B cell (primary cell): ENCODE measurements at regions of chr6 and their contacts with region 1.

Region 1: DNA sequence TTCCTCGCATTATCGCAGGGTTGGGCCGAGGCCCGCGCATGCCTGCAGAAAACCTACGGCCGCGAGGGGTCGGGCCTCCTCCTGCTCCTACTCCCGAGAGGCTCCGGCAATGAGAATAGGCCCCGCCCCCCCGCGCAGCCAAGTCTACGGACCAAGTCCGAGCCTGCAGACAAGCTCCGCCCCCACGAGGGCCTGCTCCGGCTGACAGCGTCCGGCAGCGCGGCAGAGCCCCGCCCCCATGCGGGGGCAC is 3.1 kb upstream of the GPSM3 start:
- DNase-seq: no peak
- ATAC-seq: peak; percentile 83
- H3K4me3 ChIP-seq: peak overlapping the region in 4 of 5 experiments; percentile 89 to 99 (median 94)
- H3K4me3 Mint-ChIP-seq: peak overlapping the region; percentile 95
- H3K27ac ChIP-seq: peak overlapping the region; percentile 99 to 100
- H3K27ac Mint-ChIP-seq: peak overlapping the region; percentile 99
- H3K4me1 ChIP-seq: peaks cover 40 to 56% of the 10 kb centered on the region in 2 donors
- H3K4me1 Mint-ChIP-seq: peaks cover 58% of the 10 kb centered on the region
- H3K27me3 ChIP-seq: no peaks in the 10 kb centered on the region
- H3K27me3 Mint-ChIP-seq: no peaks in the 10 kb centered on the region
- CTCF ChIP-seq: peak; percentile 55

Region 2: DNA sequence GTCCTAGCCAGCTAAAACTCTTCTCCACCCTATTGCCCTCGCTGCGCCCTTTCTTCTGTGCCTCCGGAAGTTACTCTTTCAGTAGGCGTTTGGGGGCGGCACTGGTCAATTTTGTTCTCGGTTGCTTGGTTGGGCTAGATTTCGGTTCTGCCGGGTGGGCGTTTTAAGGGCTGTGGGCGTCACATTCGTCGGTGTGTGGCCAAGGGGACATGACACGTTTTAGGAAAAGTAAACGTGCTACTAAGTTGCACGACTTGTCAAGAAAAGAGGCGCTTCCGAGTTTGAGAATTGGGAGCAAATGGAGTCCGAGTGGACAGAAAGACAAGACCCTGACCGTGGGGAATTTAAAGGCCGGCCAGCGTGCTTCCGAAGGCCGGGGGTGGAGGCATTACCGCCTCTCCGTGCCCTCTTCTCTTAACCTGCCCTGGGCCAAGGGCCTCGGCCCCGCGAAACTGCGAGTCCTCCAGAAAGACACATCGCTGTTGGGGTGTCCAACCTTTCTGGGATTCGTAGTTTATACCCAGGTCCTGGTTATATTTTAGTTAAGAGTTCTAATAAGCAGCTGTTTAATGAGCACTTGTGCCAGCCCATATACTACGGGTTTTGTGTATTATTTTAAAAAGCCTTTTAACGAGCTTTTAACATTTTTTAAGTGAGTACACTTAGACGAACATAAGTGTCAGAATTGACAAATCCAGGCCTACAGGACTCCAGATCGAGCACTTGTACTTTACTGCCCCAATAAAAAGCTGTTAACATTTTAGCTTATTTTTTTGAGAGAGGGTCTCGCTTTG is 542.5 kb before region 1 on chr6:
- CTCF ChIA-PET with region 1: no interaction called
- POLR2A ChIA-PET with region 1: no interaction called
- intact Hi-C with region 1: loop called (anchors 5 kb)
- DNase-seq: no peak
- ATAC-seq: peak; percentile 69
- H3K4me3 ChIP-seq: peak overlapping the region; percentile 66 to 96 (median 86)
- H3K4me3 Mint-ChIP-seq: peak overlapping the region; percentile 98
- H3K27ac ChIP-seq: peak overlapping the region; percentile 97 to 98
- H3K27ac Mint-ChIP-seq: peak overlapping the region; percentile 100
- H3K4me1 ChIP-seq: peaks cover 22 to 29% of the 10 kb centered on the region in 2 donors
- H3K4me1 Mint-ChIP-seq: peaks cover 48% of the 10 kb centered on the region
- H3K27me3 ChIP-seq: no peaks in the 10 kb centered on the region
- H3K27me3 Mint-ChIP-seq: no peaks in the 10 kb centered on the region
- CTCF ChIP-seq: no peak

Region 3: GRCh38 chr6:31958741-31959739 is 236.5 kb before region 1 on chr6 and contains the starts of genes NELFE and SKIC2:
- CTCF ChIA-PET with region 1: no interaction called
- POLR2A ChIA-PET with region 1: no interaction called
- intact Hi-C with region 1: loop called (anchors 5 kb)
- DNase-seq: peak; percentile 99
- ATAC-seq: peak; percentile 98
- H3K4me3 ChIP-seq: peak within 1 kb of the TSS; percentile 88 to 98 (median 91)
- H3K4me3 Mint-ChIP-seq: peak within 1 kb of the TSS; percentile 96
- H3K27ac ChIP-seq: peak within 1 kb of the TSS; percentile 84 to 91
- H3K27ac Mint-ChIP-seq: peak within 1 kb of the TSS; percentile 96
- H3K4me1 ChIP-seq: peaks cover 16 to 23% of the 10 kb centered on the region in 2 donors
- H3K4me1 Mint-ChIP-seq: peaks cover 30% of the 10 kb centered on the region
- H3K27me3 ChIP-seq: no peaks in the 10 kb centered on the region
- H3K27me3 Mint-ChIP-seq: no peaks in the 10 kb centered on the region
- CTCF ChIP-seq: no peak
- total RNA-seq, gene NELFE: 48.6 and 53.7 TPM in 2 replicates
- total RNA-seq, gene SKIC2: 119 and 122 TPM in 2 replicates

Region 4: GRCh38 chr6:32127717-32128592 is 67.6 kb before region 1 on chr6 and contains the start of gene ATF6B:
- CTCF ChIA-PET with region 1: interaction called, 9 read pairs
- POLR2A ChIA-PET with region 1: interaction called, 15 read pairs
- intact Hi-C with region 1: loop called (anchors 1 kb)
- DNase-seq: peak; percentile 98
- ATAC-seq: peak; percentile 92
- H3K4me3 ChIP-seq: peak within 1 kb of the TSS; percentile 82 to 100 (median 99)
- H3K4me3 Mint-ChIP-seq: peak within 1 kb of the TSS; percentile 98
- H3K27ac ChIP-seq: peak within 1 kb of the TSS; percentile 62 to 91
- H3K27ac Mint-ChIP-seq: peak within 1 kb of the TSS; percentile 95
- H3K4me1 ChIP-seq: peaks cover 26 to 36% of the 10 kb centered on the region in 2 donors
- H3K4me1 Mint-ChIP-seq: peaks cover 48% of the 10 kb centered on the region
- H3K27me3 ChIP-seq: no peaks in the 10 kb centered on the region
- H3K27me3 Mint-ChIP-seq: no peaks in the 10 kb centered on the region
- CTCF ChIP-seq: no peak
- total RNA-seq, gene ATF6B: 201 and 206 TPM in 2 replicates

Region 5: DNA sequence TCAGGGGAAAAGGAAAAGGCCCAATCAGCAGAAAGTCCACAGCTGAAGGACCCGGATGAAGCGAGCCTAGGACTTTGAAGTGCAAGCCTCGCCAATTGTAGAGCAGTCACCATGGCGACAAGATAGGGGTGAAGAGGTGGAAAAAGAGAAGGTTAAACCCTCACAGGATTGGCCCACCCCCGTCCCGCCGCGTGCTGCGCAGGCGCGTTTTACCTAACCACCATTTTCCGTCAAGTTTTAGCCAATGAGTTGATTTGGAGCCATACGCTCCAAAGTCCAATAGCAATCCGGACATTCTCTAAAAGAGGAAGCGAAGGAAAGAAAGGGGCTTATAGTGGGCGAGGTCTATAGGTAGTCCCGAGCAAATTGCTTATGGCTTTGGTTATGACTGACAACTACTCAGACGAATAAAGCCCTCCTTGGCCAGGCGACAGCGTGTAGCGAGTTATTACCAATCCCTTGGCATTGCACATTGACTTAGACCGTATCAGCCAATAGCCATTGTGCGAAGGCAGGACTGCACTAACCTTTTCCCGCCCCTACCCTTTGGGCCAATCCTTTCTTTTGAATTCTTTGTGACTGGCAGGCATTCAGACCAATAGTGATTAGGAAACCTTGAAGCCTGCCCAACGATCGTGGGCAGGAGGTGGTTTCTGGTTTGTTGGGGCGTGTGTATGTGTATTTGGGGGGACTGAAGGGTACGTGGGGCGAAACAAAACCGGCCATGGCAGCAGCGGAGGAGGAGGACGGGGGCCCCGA is 17.6 kb before region 1 on chr6 and contains the start of gene RNF5:
- CTCF ChIA-PET with region 1: interaction called, 7 read pairs
- POLR2A ChIA-PET with region 1: interaction called, 25 read pairs
- intact Hi-C with region 1: loop called (anchors 1 kb)
- DNase-seq: peak; percentile 99
- ATAC-seq: peak; percentile 79
- H3K4me3 ChIP-seq: peak within 1 kb of the TSS; percentile 68 to 92 (median 75)
- H3K4me3 Mint-ChIP-seq: peak within 1 kb of the TSS; percentile 97
- H3K27ac ChIP-seq: peak within 1 kb of the TSS; percentile 97 to 98
- H3K27ac Mint-ChIP-seq: peak within 1 kb of the TSS; percentile 99
- H3K4me1 ChIP-seq: peaks cover 34 to 47% of the 10 kb centered on the region in 2 donors
- H3K4me1 Mint-ChIP-seq: peaks cover 68% of the 10 kb centered on the region
- H3K27me3 ChIP-seq: no peaks in the 10 kb centered on the region
- H3K27me3 Mint-ChIP-seq: no peaks in the 10 kb centered on the region
- CTCF ChIP-seq: no peak
- total RNA-seq, gene RNF5: 39.0 and 40.7 TPM in 2 replicates

Region 6: GRCh38 chr6:33208091-33208967 is 1012.8 kb after region 1 on chr6 and contains the start of gene RING1:
- CTCF ChIA-PET with region 1: no interaction called
- POLR2A ChIA-PET with region 1: no interaction called
- intact Hi-C with region 1: loop called (anchors 1 kb)
- DNase-seq: peak; percentile 92
- ATAC-seq: peak; percentile 54
- H3K4me3 ChIP-seq: peak within 1 kb of the TSS; percentile 71 to 99 (median 90)
- H3K4me3 Mint-ChIP-seq: peak within 1 kb of the TSS; percentile 88
- H3K27ac ChIP-seq: peak within 1 kb of the TSS; percentile 87 to 91
- H3K27ac Mint-ChIP-seq: peak within 1 kb of the TSS; percentile 90
- H3K4me1 ChIP-seq: peaks cover 31 to 45% of the 10 kb centered on the region in 2 donors
- H3K4me1 Mint-ChIP-seq: peaks cover 40% of the 10 kb centered on the region
- H3K27me3 ChIP-seq: peaks cover 0 to 10% (median 8%) of the 10 kb centered on the region in 4 experiments
- H3K27me3 Mint-ChIP-seq: peaks cover 9% of the 10 kb centered on the region
- CTCF ChIP-seq: no peak
- total RNA-seq, gene RING1: 43.4 and 44.2 TPM in 2 replicates